Left ventricle myocardium inferior (tissue), 1 donor: ENCODE measurements at regions of chr3 and their contacts with region 1.

Region 1: GRCh38 chr3:69542221-69543079 is 156.6 kb upstream of the FRMD4B start:
- DNase-seq: peak; percentile 46
- H3K4me3 ChIP-seq: peak overlapping the region; percentile 82
- H3K27ac ChIP-seq: peak overlapping the region; percentile 70
- H3K4me1 ChIP-seq: peaks cover 38% of the 10 kb centered on the region
- H3K27me3 ChIP-seq: peaks cover 17% of the 10 kb centered on the region
- CTCF ChIP-seq: no peak

Region 2: GRCh38 chr3:69439643-69440270 is 102.7 kb before region 1 on chr3:
- intact Hi-C with region 1: loop called (anchors 10 kb)
- DNase-seq: no peak
- H3K4me3 ChIP-seq: peak overlapping the region; percentile 22
- H3K27ac ChIP-seq: no peak overlapping the region
- H3K4me1 ChIP-seq: peaks cover 9% of the 10 kb centered on the region
- H3K27me3 ChIP-seq: no peaks in the 10 kb centered on the region
- CTCF ChIP-seq: peak; percentile 72

Region 3: GRCh38 chr3:69612791-69613190 is 70.3 kb after region 1 on chr3:
- intact Hi-C with region 1: no loop called
- DNase-seq: no peak
- H3K4me3 ChIP-seq: no peak overlapping the region
- H3K27ac ChIP-seq: no peak overlapping the region
- H3K4me1 ChIP-seq: no peaks in the 10 kb centered on the region
- H3K27me3 ChIP-seq: no peaks in the 10 kb centered on the region
- CTCF ChIP-seq: no peak

Region 4: GRCh38 chr3:69806735-69807438 is 264.4 kb after region 1 on chr3:
- intact Hi-C with region 1: no loop called
- DNase-seq: no peak
- H3K4me3 ChIP-seq: no peak overlapping the region
- H3K27ac ChIP-seq: no peak overlapping the region
- H3K4me1 ChIP-seq: peaks cover 41% of the 10 kb centered on the region
- H3K27me3 ChIP-seq: no peaks in the 10 kb centered on the region
- CTCF ChIP-seq: no peak